ENCODE measurements at regions of chr17 and their contacts with region 1.

Region 1: GRCh38 chr17:47698749-47699535 is 5.0 kb downstream of the TBKBP1 start:
- DNase-seq: peak; percentile 63
- H3K4me3 ChIP-seq: no peak overlapping the region
- H3K27ac ChIP-seq: no peak overlapping the region
- H3K4me1 ChIP-seq: no peaks in the 10 kb centered on the region
- H3K27me3 ChIP-seq: no peaks in the 10 kb centered on the region
- CTCF ChIP-seq: peak; percentile 89

Region 2: DNA sequence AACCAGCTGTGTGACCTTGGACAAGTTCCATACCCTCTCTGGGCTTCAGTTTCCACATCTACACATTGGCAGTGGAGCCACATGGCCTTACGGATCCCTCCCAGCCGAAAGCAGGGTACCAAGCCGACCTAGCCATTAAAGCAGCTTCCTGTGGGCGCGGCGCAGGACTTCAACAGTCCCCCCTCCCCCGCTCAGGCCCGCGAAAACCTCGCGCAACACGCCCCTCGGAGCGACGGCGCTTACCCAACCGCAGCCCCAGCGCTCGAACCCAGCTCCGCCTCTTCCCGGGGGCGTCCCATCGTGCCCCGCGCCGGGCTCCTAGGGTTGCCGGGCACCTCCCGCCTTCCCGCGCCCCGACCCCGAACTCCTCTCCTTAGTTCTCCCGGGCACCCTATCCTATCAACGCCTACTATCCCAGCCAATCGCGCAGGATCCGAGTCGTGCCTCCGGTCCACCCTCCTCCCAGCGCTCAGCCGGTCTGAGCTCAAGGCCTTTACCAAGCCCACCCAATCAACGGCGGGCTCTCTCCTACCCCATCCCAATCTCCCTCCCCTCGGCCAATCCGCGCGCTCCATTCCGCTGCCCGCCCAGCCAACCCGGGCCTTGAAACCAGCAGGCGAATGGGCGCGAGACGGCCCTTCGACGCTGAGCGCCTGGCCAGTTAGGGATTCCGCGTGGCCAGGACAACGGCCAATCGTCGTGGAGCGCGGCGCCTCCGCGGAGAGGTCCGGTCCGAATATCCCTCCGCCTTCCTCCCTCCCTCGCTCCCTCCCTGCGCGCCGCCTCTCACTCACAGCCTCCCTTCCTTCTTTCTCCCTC is 49.6 kb before region 1 on chr17 and contains the start of gene KPNB1:
- CTCF ChIA-PET with region 1: no interaction called
- POLR2A ChIA-PET with region 1: interaction called, 20 read pairs
- intact Hi-C with region 1: no loop called
- DNase-seq: peak; percentile 99
- H3K4me3 ChIP-seq: peak within 1 kb of the TSS; percentile 69
- H3K27ac ChIP-seq: peak within 1 kb of the TSS; percentile 85
- H3K4me1 ChIP-seq: peaks cover 22% of the 10 kb centered on the region
- H3K27me3 ChIP-seq: no peaks in the 10 kb centered on the region
- CTCF ChIP-seq: no peak
- total RNA-seq, gene KPNB1: 429 and 452 TPM in 2 replicates

Region 3: DNA sequence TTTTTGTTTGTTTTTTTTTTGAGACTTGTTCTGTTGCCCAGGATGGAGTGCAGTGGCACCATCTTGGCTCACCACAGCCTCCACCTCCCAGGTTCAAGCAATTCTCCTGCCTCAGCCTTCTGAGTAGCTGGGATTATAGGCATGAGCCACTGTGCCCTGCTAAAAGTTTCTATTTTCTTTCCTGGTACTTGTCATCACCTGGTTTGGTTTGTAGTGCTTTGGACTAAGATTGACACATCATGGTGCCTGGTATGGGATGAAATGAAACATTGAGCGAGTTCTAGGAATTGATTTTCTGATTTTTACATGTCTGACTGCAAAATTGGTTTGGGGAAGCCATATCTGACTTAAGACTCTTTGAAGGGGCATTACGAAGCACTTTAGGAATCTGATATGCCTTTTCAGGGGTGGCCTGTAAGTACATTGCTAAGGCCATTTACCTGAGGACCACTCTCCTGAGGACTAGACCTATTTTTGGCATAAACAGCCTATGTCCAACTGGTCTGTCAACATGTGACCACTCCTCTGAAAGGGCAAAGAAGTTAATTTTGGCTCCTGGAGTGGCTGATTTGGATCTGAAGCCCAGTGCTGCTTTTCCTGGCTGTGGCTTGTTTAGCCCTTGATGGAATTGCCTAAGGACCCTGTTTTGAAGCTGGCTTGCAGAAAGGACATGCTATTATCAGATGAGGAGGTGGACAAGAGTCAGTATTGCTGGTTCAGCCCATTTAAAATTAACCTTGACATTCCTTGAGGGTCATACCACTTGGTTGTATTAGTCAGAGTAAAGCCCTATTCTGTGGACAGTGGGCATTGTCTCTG is 23.4 kb before region 1 on chr17:
- CTCF ChIA-PET with region 1: no interaction called
- POLR2A ChIA-PET with region 1: interaction called, 11 read pairs
- intact Hi-C with region 1: no loop called
- DNase-seq: no peak
- H3K4me3 ChIP-seq: no peak overlapping the region
- H3K27ac ChIP-seq: no peak overlapping the region
- H3K4me1 ChIP-seq: no peaks in the 10 kb centered on the region
- H3K27me3 ChIP-seq: no peaks in the 10 kb centered on the region
- CTCF ChIP-seq: no peak

Region 4: GRCh38 chr17:47720754-47721533 is 22.0 kb after region 1 on chr17:
- CTCF ChIA-PET with region 1: no interaction called
- POLR2A ChIA-PET with region 1: no interaction called
- intact Hi-C with region 1: no loop called
- DNase-seq: peak; percentile 13
- H3K4me3 ChIP-seq: no peak overlapping the region
- H3K27ac ChIP-seq: no peak overlapping the region
- H3K4me1 ChIP-seq: no peaks in the 10 kb centered on the region
- H3K27me3 ChIP-seq: no peaks in the 10 kb centered on the region
- CTCF ChIP-seq: no peak

Region 5: DNA sequence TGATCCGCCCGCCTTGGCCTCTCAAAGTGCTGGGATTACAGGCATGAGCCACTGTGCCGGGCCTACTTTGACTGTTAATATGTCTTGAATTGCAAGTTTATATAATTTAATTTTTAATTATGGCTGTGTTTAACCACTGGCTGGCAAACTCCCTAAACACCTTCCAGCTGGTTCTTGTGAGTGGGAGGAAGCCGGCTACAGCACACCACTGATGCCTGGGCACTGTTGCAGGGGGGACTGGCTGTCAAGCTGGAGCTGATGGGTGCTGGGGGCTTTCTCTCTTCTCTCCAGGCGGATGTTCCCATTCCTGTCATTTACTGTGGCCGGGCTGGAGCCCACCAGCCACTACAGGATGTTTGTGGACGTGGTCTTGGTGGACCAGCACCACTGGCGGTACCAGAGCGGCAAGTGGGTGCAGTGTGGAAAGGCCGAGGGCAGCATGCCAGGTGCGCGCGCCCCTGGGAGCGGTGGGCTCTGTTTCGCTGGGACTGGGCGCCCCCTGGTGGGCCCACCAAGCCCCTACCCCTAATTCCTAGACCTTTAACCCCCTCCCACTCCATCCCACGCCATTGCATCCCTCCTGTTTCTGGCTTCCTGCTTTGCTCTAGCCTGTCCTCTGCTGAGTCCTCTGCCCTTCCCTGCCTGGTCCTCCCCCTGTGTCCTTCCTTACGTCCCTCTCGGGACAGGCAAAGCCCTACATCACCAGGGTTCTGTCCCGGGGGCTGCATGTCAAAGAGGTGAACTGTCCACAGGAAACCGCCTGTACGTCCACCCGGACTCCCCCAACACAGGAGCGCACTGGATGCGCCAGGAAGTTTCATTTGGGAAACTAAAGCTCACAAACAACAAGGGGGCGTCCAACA is 43.6 kb after region 1 on chr17:
- CTCF ChIA-PET with region 1: no interaction called
- POLR2A ChIA-PET with region 1: no interaction called
- intact Hi-C with region 1: loop called (anchors 2 kb)
- DNase-seq: no peak
- H3K4me3 ChIP-seq: no peak overlapping the region
- H3K27ac ChIP-seq: no peak overlapping the region
- H3K4me1 ChIP-seq: no peaks in the 10 kb centered on the region
- H3K27me3 ChIP-seq: no peaks in the 10 kb centered on the region
- CTCF ChIP-seq: peak; percentile 58

Region 6: DNA sequence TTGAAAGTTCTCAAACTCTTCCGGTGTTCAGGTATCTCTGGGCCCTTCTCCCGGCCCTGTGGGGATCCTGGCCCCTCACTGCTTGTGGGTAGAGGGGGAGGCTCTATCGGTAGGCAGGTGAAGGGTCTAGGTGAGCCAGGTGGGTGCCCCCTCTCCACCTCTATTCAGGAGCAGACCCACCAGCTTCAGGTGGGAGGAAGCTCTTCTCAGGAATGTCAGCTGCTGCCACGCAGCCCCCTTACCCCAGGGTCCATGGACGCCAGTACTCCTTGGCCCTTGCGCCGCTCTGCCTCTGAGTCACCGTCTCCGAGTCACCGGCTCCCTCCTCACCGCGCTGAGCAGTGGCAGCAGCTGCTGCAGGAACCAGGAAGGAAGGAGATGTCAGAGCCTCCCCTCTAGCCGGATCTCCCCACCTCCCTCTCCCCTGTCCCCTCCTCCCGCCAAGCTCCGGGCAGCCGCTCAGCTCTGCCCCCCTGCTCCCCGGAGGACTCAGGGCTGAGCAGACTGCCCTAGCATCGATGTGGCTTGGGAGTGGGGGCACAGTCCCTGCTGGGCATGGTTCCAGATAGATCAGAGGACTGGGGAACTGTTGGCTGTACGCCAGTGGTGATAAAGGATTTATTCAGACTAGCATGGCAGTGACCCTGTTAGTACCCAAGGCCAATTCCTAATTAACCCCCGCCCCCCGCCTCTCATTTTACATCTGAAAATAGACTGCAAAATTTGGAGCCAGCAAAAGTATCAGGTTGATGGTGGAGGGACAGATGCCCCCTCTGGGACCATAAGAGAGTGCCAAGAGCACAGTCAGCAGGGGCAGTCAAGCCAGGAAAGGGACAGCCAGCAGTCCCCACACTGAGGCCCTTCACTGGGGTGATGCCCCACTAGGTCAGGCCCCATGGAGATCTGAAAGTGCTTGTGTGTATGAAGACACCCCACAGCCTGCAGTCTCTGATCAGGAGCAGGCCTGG is 122.8 kb after region 1 on chr17 and contains the start of gene OSBPL7:
- CTCF ChIA-PET with region 1: no interaction called
- POLR2A ChIA-PET with region 1: no interaction called
- intact Hi-C with region 1: no loop called
- DNase-seq: peak; percentile 68
- H3K4me3 ChIP-seq: peak within 1 kb of the TSS; percentile 60
- H3K27ac ChIP-seq: no peak within 1 kb of the TSS
- H3K4me1 ChIP-seq: peaks cover 7% of the 10 kb centered on the region
- H3K27me3 ChIP-seq: no peaks in the 10 kb centered on the region
- CTCF ChIP-seq: peak; percentile 50
- total RNA-seq, gene OSBPL7: 9.1 TPM in 2 replicates

Region 7: DNA sequence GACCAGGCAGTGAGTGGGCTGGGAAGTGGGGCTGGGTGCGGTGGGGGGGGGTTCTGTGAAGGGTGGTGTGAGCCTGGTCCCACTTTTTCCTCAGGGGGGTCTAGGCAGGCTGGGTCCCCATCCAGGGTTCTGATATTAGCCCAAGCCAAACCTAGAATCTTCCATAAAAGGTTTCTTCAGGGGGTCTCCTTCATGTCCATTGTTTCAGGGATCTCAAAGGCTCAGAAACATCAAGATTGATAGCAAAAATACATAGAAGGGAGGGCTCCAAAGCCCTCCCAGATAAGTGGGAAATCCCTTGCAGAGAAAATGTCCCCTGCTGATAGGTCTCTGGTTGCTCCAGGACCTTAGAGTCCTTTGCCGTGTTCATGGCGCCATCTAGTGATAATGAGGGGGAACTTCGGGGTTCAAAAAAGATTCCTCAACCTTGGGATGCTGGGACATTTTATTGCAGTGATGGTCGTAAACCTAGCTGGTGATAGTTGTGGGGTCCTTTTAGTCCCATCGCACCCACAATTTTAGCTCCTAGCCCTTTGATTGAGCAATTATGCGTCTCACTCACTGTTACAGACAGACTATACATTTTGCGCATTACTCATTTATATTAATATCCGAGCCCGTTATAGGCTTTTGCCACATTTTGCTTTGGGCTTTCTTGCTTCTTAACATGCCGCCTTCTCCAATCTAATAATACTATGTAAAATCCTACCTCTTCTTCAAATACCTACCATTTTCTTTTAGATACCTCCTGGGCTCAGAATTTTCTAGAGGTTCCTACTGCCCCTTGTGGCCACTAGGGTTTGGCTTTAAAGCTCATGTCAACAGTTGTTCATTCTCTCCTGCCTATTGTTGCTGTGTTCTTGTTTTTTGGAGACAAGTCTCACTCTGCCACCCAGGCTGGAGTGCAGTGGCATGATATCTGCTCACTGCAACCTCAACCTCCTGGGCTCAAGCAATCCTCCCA is 1333.3 kb after region 1 on chr17:
- CTCF ChIA-PET with region 1: no interaction called
- POLR2A ChIA-PET with region 1: no interaction called
- intact Hi-C with region 1: no loop called
- DNase-seq: peak; percentile 96
- H3K4me3 ChIP-seq: no peak overlapping the region
- H3K27ac ChIP-seq: peak overlapping the region; percentile 76
- H3K4me1 ChIP-seq: peaks cover 61% of the 10 kb centered on the region
- H3K27me3 ChIP-seq: no peaks in the 10 kb centered on the region
- CTCF ChIP-seq: peak; percentile 76

Measured in A673 (cell line).